ENCODE measurements at regions of chr9 and their contacts with region 1.

Region 1: GRCh38 chr9:123524866-123525265 is 168.9 kb downstream of the CRB2 start:
- DNase-seq: no peak
- ATAC-seq: no peak
- H3K4me3 ChIP-seq: no peak overlapping the region
- H3K4me3 Mint-ChIP-seq: no peak overlapping the region
- H3K27ac ChIP-seq: no peak overlapping the region
- H3K27ac Mint-ChIP-seq: no peak overlapping the region
- H3K4me1 ChIP-seq: no peaks in the 10 kb centered on the region
- H3K4me1 Mint-ChIP-seq: no peaks in the 10 kb centered on the region
- H3K27me3 ChIP-seq: no peaks in the 10 kb centered on the region
- H3K27me3 Mint-ChIP-seq: no peaks in the 10 kb centered on the region

Region 2: GRCh38 chr9:123460091-123460490 is 64.8 kb before region 1 on chr9:
- CTCF ChIA-PET with region 1: interaction called in 1 of 2 experiments, 10 read pairs
- POLR2A ChIA-PET with region 1: no interaction called
- DNase-seq: no peak
- ATAC-seq: no peak
- H3K4me3 ChIP-seq: no peak overlapping the region
- H3K4me3 Mint-ChIP-seq: no peak overlapping the region
- H3K27ac ChIP-seq: no peak overlapping the region
- H3K27ac Mint-ChIP-seq: no peak overlapping the region
- H3K4me1 ChIP-seq: no peaks in the 10 kb centered on the region
- H3K4me1 Mint-ChIP-seq: no peaks in the 10 kb centered on the region
- H3K27me3 ChIP-seq: no peaks in the 10 kb centered on the region
- H3K27me3 Mint-ChIP-seq: no peaks in the 10 kb centered on the region